ENCODE measurements at regions of chr15 and their contacts with region 1.

Region 1: GRCh38 chr15:68586274-68586961 is 7.6 kb downstream of the CORO2B start:
- DNase-seq: no peak
- ATAC-seq: peak in 1 of 2 donors; percentile 32
- H3K4me3 ChIP-seq: no peak overlapping the region
- H3K27ac ChIP-seq: peak overlapping the region in 1 of 4 donors; percentile 18
- H3K4me1 ChIP-seq: no peaks in the 10 kb centered on the region
- H3K27me3 ChIP-seq: no peaks in the 10 kb centered on the region
- CTCF ChIP-seq: no peak
- POLR2A ChIP-seq: no peak

Region 2: DNA sequence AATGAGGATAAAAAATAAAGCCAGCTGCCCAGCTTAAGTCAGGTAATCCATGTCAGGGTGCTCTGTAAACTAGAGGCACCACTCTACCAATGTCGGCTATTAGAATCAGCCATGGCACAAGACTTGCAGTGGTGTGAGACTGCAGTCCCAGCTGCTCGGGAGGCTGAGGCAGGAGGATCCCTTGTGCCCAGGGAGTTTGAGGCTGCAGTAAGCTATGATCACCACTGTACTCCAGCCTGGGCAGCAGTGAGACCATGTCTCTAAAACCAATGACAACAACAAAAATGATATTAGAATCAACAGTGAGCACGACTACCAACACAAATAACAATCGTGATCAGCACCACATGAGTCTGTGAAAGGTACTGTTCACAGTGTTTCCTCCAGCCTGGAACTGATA is 37.7 kb after region 1 on chr15:
- in situ Hi-C with region 1: no loop called
- intact Hi-C with region 1: no loop called
- DNase-seq: no peak
- ATAC-seq: no peak
- H3K4me3 ChIP-seq: no peak overlapping the region
- H3K27ac ChIP-seq: no peak overlapping the region
- H3K4me1 ChIP-seq: peaks cover 11% of the 10 kb centered on the region in 2 donors
- H3K27me3 ChIP-seq: no peaks in the 10 kb centered on the region
- CTCF ChIP-seq: no peak
- POLR2A ChIP-seq: no peak

Region 3: DNA sequence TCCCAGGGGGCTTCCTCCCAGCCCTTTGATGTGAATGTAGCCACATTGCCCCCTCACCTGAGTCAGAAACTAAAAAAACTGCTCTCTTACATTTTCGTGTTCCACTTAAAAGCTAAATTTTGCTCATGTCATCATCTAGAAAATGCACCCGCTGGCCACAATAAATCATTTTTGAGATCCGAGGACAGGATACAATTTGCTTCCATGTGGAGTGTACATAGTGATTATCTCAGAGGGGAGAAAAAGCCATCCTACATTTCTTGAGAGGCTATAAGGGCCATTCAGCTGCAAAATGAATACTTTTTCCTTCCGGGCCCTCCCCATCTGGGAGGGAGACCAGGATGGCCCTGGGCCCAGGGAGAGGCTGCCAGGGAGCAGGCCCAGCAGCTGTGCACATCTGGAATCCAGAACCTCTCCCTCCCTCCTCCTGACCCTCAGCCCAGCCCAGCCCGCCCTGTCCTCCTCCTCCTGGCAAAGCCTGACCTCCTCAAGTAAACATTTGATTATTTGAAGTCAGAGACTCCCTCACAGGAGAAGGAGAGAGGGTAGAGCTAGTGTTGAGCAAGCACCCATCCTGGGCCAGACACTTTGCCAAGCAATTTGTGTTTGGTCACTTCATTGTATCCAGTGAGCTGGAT is 51.5 kb after region 1 on chr15:
- in situ Hi-C with region 1: loop called in 1 of 4 experiments (anchors 10 kb)
- intact Hi-C with region 1: no loop called
- DNase-seq: peak; percentile 47 to 73
- ATAC-seq: peak; percentile 72 to 74
- H3K4me3 ChIP-seq: no peak overlapping the region
- H3K27ac ChIP-seq: peak overlapping the region in 3 of 4 donors; percentile 14 to 33 (median 26)
- H3K4me1 ChIP-seq: peaks cover 41 to 53% of the 10 kb centered on the region in 2 donors
- H3K27me3 ChIP-seq: no peaks in the 10 kb centered on the region
- CTCF ChIP-seq: no peak
- POLR2A ChIP-seq: no peak